Aorta (tissue), 5 donors: ENCODE measurements at regions of chr12 and their contacts with region 1.

Region 1: GRCh38 chr12:111942557-111942956 is 70.4 kb downstream of the TMEM116 start:
- DNase-seq: no peak
- ATAC-seq: no peak
- H3K4me3 ChIP-seq: no peak overlapping the region
- H3K27ac ChIP-seq: no peak overlapping the region
- H3K4me1 ChIP-seq: no peaks in the 10 kb centered on the region
- H3K27me3 ChIP-seq: no peaks in the 10 kb centered on the region

Region 2: GRCh38 chr12:111529424-111530368 is 412.9 kb before region 1 on chr12:
- intact Hi-C with region 1: no loop called
- DNase-seq: peak in 1 of 2 donors; percentile 53
- ATAC-seq: peak; percentile 64
- H3K4me3 ChIP-seq: no peak overlapping the region
- H3K27ac ChIP-seq: no peak overlapping the region
- H3K4me1 ChIP-seq: no peaks in the 10 kb centered on the region
- H3K27me3 ChIP-seq: no peaks in the 10 kb centered on the region

Region 3: GRCh38 chr12:111873113-111873512 is 69.4 kb before region 1 on chr12:
- intact Hi-C with region 1: no loop called
- DNase-seq: no peak
- ATAC-seq: no peak
- H3K4me3 ChIP-seq: no peak overlapping the region
- H3K27ac ChIP-seq: no peak overlapping the region
- H3K4me1 ChIP-seq: no peaks in the 10 kb centered on the region
- H3K27me3 ChIP-seq: no peaks in the 10 kb centered on the region

Region 4: GRCh38 chr12:112012775-112013600 is 70.4 kb after region 1 on chr12 and contains the starts of genes ERP29 and TMEM116:
- intact Hi-C with region 1: loop called (anchors 2 kb)
- DNase-seq: peak; percentile 99 to 100
- ATAC-seq: peak; percentile 98
- H3K4me3 ChIP-seq: peak within 1 kb of the TSS; percentile 57 to 88
- H3K27ac ChIP-seq: peak within 1 kb of the TSS; percentile 31 to 82
- H3K4me1 ChIP-seq: no peaks in the 10 kb centered on the region
- H3K27me3 ChIP-seq: no peaks in the 10 kb centered on the region
- total RNA-seq, gene ERP29: 41.5 to 62.2 TPM
- total RNA-seq, gene TMEM116: 8.5 to 9.9 TPM

Region 5: DNA sequence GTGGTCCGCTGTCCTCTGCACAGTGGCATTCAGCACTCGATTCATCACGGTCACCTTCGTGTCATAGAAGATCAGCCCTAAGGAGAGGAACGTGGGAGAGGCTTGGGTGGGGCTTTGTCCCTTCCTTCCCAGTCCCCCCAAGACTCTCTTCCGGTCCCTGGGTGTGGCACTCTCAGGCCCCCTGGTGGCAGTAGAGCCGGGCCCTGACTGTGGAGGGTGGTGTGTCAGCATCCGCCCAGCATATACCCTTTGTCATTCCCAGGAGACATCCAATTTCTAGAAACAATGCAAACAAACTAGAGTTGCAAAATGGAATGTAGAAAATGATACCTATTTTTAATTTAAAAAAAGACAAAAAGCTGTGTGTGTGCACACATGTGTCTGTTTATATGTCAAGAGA is 227.8 kb after region 1 on chr12:
- intact Hi-C with region 1: loop called in 1 of 2 experiments (anchors 10 kb)
- DNase-seq: peak in 1 of 2 donors; percentile 72
- ATAC-seq: no peak
- H3K4me3 ChIP-seq: no peak overlapping the region
- H3K27ac ChIP-seq: no peak overlapping the region
- H3K4me1 ChIP-seq: no peaks in the 10 kb centered on the region
- H3K27me3 ChIP-seq: no peaks in the 10 kb centered on the region

Region 6: DNA sequence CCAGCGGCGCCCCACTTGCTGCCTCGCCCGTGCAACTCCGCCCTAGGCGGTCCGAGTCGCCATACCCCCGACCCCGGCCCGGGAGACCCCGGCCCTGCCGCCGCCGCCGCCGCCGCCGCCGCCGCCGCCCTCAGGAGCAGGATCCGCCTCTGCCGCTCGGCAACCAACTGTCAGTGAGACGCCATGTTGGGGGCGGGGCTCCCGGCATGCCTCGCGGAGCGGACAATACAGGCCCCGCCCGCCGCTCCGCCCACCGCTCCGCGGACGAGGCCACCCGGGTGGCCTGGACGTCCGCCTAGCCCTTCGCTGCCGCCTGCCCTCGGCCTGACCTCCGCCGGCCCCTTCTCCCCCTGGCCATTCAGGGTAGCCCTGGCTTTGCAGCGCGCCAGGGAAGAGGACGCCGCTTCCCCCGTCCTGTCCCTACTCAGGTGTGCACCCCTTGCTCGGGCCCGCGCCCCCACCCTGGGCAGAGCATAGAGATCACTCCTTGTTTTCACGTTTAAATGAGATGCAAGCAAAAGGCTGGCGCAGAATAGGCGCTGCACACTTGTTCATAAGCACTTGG is 439.8 kb after region 1 on chr12 and contains the start of gene HECTD4:
- intact Hi-C with region 1: loop called in 1 of 2 experiments (anchors 10 kb)
- DNase-seq: peak; percentile 97 to 99
- ATAC-seq: peak; percentile 98
- H3K4me3 ChIP-seq: peak within 1 kb of the TSS; percentile 77 to 95
- H3K27ac ChIP-seq: peak within 1 kb of the TSS in 1 of 2 donors; percentile 58
- H3K4me1 ChIP-seq: peaks cover 0 to 1% of the 10 kb centered on the region in 2 donors
- H3K27me3 ChIP-seq: no peaks in the 10 kb centered on the region
- total RNA-seq, gene HECTD4: 64.4 to 78.5 TPM

Region 7: DNA sequence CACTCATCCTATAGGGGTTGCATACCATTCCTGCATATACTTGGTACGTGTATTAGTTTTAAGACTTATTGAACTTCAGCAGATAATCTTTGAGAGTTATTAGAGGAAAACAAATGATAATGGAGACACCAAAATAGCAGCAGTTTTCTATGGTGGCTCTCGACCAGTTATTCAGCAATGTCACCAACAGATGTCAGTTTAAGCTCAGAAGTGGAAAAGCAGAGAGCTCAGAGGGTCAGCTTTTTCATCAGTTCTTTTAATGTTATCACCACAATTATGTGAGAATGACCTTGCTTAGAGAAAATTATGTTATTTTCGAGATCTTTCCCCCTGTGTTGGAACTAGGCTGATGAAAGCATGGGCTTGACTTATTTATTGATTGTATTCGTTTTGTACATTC is 508.2 kb after region 1 on chr12:
- intact Hi-C with region 1: no loop called
- DNase-seq: no peak
- ATAC-seq: no peak
- H3K4me3 ChIP-seq: no peak overlapping the region
- H3K27ac ChIP-seq: no peak overlapping the region
- H3K4me1 ChIP-seq: no peaks in the 10 kb centered on the region
- H3K27me3 ChIP-seq: no peaks in the 10 kb centered on the region